MCF 10A (cell line): ENCODE measurements at regions of chr13 and their contacts with region 1.

Region 1: GRCh38 chr13:76980075-76980718 is 11.7 kb upstream of the CLN5 start:
- DNase-seq: peak; percentile 70
- H3K4me3 Mint-ChIP-seq: peak overlapping the region; percentile 52
- H3K27ac Mint-ChIP-seq: no peak overlapping the region
- H3K4me1 Mint-ChIP-seq: peaks cover 19% of the 10 kb centered on the region
- H3K27me3 Mint-ChIP-seq: peaks cover 20% of the 10 kb centered on the region
- CTCF ChIP-seq: peak; percentile 94

Region 2: GRCh38 chr13:76903544-76904162 is 76.5 kb before region 1 on chr13:
- CTCF ChIA-PET with region 1: interaction called, 25 read pairs
- POLR2A ChIA-PET with region 1: interaction called, 7 read pairs
- intact Hi-C with region 1: loop called (anchors 1 kb)
- DNase-seq: peak; percentile 79
- H3K4me3 Mint-ChIP-seq: no peak overlapping the region
- H3K27ac Mint-ChIP-seq: no peak overlapping the region
- H3K4me1 Mint-ChIP-seq: peaks cover 9% of the 10 kb centered on the region
- H3K27me3 Mint-ChIP-seq: no peaks in the 10 kb centered on the region
- CTCF ChIP-seq: peak; percentile 98

Region 3: GRCh38 chr13:76932076-76932475 is 48.1 kb before region 1 on chr13:
- CTCF ChIA-PET with region 1: interaction called, 16 read pairs
- POLR2A ChIA-PET with region 1: interaction called, 11 read pairs
- intact Hi-C with region 1: no loop called
- DNase-seq: no peak
- H3K4me3 Mint-ChIP-seq: no peak overlapping the region
- H3K27ac Mint-ChIP-seq: no peak overlapping the region
- H3K4me1 Mint-ChIP-seq: peaks cover 7% of the 10 kb centered on the region
- H3K27me3 Mint-ChIP-seq: no peaks in the 10 kb centered on the region
- CTCF ChIP-seq: no peak

Region 4: GRCh38 chr13:76944456-76944855 is 35.7 kb before region 1 on chr13:
- CTCF ChIA-PET with region 1: interaction called, 8 read pairs
- POLR2A ChIA-PET with region 1: interaction called, 8 read pairs
- intact Hi-C with region 1: loop called (anchors 5 kb)
- DNase-seq: peak; percentile 86
- H3K4me3 Mint-ChIP-seq: no peak overlapping the region
- H3K27ac Mint-ChIP-seq: peak overlapping the region; percentile 69
- H3K4me1 Mint-ChIP-seq: peaks cover 23% of the 10 kb centered on the region
- H3K27me3 Mint-ChIP-seq: no peaks in the 10 kb centered on the region
- CTCF ChIP-seq: no peak

Region 5: DNA sequence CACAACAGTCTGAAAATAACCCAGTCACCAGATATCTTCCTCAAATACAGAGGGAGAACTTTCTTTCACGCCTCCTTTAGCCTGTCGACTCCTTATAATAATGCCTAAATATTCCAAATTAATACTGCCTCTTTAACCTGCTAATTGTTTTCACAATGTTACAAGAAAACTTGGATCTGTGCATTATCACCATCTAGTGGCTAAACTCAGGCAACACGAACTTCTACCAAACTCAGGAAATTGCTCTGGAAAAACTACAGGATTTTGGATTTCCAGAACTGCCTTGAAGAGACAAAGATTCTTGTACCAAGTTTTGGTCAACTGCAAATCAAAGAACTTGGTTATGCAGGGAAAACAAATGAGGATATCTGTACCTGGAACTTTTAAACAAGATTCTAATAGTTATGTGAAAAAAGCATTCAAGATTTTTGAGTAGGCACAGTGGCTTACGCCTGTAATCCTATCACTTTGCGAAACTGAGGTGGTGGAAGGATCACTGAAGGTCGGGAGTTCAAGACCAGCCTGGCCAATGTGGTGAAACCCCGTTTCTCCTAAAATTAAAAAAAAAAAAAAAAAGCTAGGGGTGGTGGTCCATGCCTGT is 22.5 kb after region 1 on chr13:
- CTCF ChIA-PET with region 1: interaction called, 13 read pairs
- POLR2A ChIA-PET with region 1: no interaction called
- intact Hi-C with region 1: no loop called
- DNase-seq: peak; percentile 49
- H3K4me3 Mint-ChIP-seq: no peak overlapping the region
- H3K27ac Mint-ChIP-seq: peak overlapping the region; percentile 69
- H3K4me1 Mint-ChIP-seq: peaks cover 6% of the 10 kb centered on the region
- H3K27me3 Mint-ChIP-seq: no peaks in the 10 kb centered on the region
- CTCF ChIP-seq: peak; percentile 55